Activated CD4-positive, alpha-beta T cell treated with anti-CD3 and anti-CD28 coated beads, Interleukin-2, amount 10 ng/mL, durations not matched to agents 7 days and 5 days (primary cell): ENCODE measurements at regions of chr17 and their contacts with region 1.

Region 1: GRCh38 chr17:50117202-50118051 is 12.5 kb downstream of the SAMD14 start:
- DNase-seq: peak; percentile 60
- H3K4me3 Mint-ChIP-seq: no peak overlapping the region
- H3K27ac Mint-ChIP-seq: no peak overlapping the region
- H3K4me1 Mint-ChIP-seq: peaks cover 7% of the 10 kb centered on the region
- H3K27me3 Mint-ChIP-seq: peaks cover 56% of the 10 kb centered on the region

Region 2: GRCh38 chr17:50051082-50051576 is 66.3 kb before region 1 on chr17:
- CTCF ChIA-PET with region 1: no interaction called
- POLR2A ChIA-PET with region 1: no interaction called
- DNase-seq: peak; percentile 34
- H3K4me3 Mint-ChIP-seq: no peak overlapping the region
- H3K27ac Mint-ChIP-seq: peak overlapping the region; percentile 77
- H3K4me1 Mint-ChIP-seq: peaks cover 32% of the 10 kb centered on the region
- H3K27me3 Mint-ChIP-seq: peaks cover 4% of the 10 kb centered on the region

Region 3: DNA sequence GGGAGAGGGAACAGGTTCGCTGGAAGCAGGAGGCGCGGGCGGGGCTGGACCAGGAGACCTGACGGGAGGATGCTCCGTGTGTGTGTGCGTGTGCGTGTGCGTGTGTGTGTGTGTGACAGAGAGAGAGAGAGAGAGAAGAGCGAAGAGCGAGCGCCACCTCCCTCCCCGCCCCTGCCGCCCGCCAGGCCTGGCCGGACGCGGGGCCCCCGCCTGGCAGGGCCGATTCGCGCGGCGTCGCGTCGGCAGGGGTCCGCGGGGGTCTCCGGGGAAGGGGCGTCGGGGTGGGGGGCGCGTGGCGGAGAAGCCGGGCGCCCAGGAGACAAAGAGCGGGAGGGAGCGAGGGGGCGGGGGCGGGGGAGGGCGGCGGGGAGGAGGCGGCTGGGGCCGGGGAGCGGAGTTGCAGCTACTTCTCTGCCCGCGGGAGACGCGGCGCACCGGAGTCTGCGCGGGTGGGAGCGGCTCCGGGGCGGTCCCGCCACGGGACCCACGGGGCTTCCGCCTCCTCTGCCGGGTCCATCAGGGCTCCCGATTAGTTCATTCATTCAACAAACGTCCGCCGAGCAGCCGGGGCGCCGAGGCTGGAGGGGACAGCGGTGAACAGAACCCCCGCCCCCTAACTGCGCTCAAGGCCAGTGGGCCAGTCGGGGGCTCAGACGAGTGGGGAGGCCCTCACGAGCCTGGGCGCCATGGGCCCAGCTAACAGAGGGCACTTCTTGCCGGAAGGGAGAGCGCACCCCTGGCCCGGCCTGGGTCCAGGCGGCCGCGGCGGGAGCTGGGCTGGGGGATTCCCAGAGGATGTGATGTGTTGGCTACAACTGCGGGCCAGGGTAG is 12.5 kb after region 1 on chr17 and contains the start of gene SAMD14:
- CTCF ChIA-PET with region 1: interaction called, 17 read pairs
- POLR2A ChIA-PET with region 1: no interaction called
- DNase-seq: peak; percentile 52
- H3K4me3 Mint-ChIP-seq: peak within 1 kb of the TSS; percentile 51
- H3K27ac Mint-ChIP-seq: peak within 1 kb of the TSS; percentile 81
- H3K4me1 Mint-ChIP-seq: peaks cover 25% of the 10 kb centered on the region
- H3K27me3 Mint-ChIP-seq: peaks cover 37% of the 10 kb centered on the region
- total RNA-seq, gene SAMD14: 0.07 to 0.23 TPM